Transverse colon (tissue), 4 donors: ENCODE measurements at regions of chr11 and their contacts with region 1.

Region 1: DNA sequence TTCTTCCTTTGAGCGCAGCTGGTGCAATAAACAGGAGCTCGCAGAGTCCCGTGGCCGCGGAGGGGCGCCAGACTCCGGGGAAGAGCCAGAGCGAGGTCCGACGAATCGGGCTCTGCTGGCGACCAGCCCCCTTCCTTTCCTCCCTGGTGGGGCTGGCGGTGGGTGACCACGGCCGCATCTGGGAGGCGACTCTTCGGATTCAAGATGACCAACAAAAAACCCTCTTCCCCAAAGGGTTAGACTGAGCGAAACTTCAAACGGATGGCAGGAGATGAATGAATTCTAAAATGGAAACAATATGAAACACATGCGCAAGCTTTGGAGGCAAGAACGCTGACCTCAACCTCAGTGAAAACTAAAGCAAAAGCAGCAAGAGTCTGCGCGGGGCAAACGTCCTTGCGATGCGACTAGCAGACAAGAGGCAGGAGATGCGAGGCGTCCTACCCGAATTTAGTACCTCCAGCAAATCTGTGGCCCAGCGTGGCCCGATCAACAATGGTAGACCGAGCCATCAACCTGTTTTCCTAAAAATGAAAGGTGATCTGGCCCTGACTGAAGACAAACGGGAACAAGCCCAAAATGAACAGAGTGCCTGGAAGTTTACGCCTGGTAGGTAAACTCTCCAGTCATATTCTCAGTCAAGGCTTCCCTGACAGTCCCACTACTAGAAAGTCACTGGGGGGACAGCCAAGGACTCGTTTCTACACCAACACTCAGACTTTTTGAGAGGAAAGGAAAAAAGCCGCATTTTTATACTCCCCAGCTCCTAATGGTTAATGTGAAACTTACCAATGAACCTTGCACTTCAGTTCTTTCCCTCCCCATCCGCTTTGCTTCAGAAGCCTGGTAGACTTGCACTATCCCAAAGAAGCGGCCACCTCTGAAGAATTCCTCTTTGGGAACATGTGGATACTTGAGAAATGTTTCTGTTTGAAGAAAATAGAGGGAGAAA is 11.6 kb downstream of the MMP3 start:
- DNase-seq: peak; percentile 51
- H3K4me3 ChIP-seq: peak overlapping the region in 2 of 4 donors; percentile 16 to 37
- H3K27ac ChIP-seq: peak overlapping the region in 1 of 4 donors; percentile 17
- H3K4me1 ChIP-seq: peaks cover 0 to 7% (median 0%) of the 10 kb centered on the region in 4 donors
- H3K27me3 ChIP-seq: peaks cover 5% of the 10 kb centered on the region
- CTCF ChIP-seq: peak; percentile 29 to 59 (median 46)
- EP300 ChIP-seq: no peak
- POLR2A ChIP-seq: no peak

Region 2: GRCh38 chr11:102109896-102110760 is 721.6 kb before region 1 on chr11 and contains the start of gene YAP1:
- in situ Hi-C with region 1: no loop called
- intact Hi-C with region 1: no loop called
- DNase-seq: peak; percentile 89
- H3K4me3 ChIP-seq: peak within 1 kb of the TSS; percentile 85 to 95 (median 90)
- H3K27ac ChIP-seq: peak within 1 kb of the TSS; percentile 95 to 99 (median 96)
- H3K4me1 ChIP-seq: peaks cover 8 to 35% (median 15%) of the 10 kb centered on the region in 4 donors
- H3K27me3 ChIP-seq: no peaks in the 10 kb centered on the region
- CTCF ChIP-seq: peak in 1 of 5 experiments; percentile 19
- EP300 ChIP-seq: no peak
- POLR2A ChIP-seq: peak; percentile 63
- total RNA-seq, gene YAP1: 90.5 to 163 (median 105) TPM

Region 3: GRCh38 chr11:104776493-104777170 is 1944.9 kb after region 1 on chr11:
- in situ Hi-C with region 1: no loop called
- intact Hi-C with region 1: loop called (anchors 5 kb)
- DNase-seq: no peak
- H3K4me3 ChIP-seq: no peak overlapping the region
- H3K27ac ChIP-seq: no peak overlapping the region
- H3K4me1 ChIP-seq: no peaks in the 10 kb centered on the region
- H3K27me3 ChIP-seq: no peaks in the 10 kb centered on the region
- CTCF ChIP-seq: no peak
- EP300 ChIP-seq: no peak
- POLR2A ChIP-seq: no peak